Left colon (tissue), 2 donors: ENCODE measurements at regions of chr1 and their contacts with region 1.

Region 1: GRCh38 chr1:160291248-160292220 is 6.6 kb upstream of the PEX19 start:
- DNase-seq: peak; percentile 47 to 59
- ATAC-seq: peak; percentile 92

Region 2: GRCh38 chr1:160058087-160058486 is 233.4 kb before region 1 on chr1:
- intact Hi-C with region 1: no loop called
- DNase-seq: no peak
- ATAC-seq: no peak

Region 3: GRCh38 chr1:160193091-160193819 is 98.3 kb before region 1 on chr1:
- intact Hi-C with region 1: loop called in 1 of 2 experiments (anchors 5 kb)
- DNase-seq: peak; percentile 62 to 85
- ATAC-seq: peak; percentile 92

Region 4: GRCh38 chr1:160244209-160244608 is 47.3 kb before region 1 on chr1:
- intact Hi-C with region 1: loop called in 1 of 2 experiments (anchors 10 kb)
- DNase-seq: no peak
- ATAC-seq: no peak

Region 5: DNA sequence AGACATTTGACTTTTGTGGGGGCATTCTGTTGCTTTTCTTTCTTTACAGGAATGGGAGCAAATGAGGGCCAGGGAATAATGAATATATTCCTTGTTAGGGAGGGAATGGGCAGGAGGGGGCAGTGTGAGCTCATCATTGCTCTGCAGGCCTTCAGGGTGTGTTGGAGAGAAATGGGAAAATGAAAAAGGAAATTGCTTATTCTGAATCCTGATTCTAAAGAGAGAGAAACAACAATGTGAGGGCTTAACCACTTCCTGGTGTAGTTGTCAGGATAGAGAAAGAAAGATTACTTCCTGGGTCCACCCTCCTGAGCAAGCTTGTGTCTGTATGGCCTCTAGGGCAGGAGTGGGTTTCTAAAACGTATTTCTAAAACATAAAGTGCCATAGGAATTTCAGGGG is 137.1 kb after region 1 on chr1:
- intact Hi-C with region 1: no loop called
- DNase-seq: peak; percentile 49 to 79
- ATAC-seq: peak; percentile 89

Region 6: DNA sequence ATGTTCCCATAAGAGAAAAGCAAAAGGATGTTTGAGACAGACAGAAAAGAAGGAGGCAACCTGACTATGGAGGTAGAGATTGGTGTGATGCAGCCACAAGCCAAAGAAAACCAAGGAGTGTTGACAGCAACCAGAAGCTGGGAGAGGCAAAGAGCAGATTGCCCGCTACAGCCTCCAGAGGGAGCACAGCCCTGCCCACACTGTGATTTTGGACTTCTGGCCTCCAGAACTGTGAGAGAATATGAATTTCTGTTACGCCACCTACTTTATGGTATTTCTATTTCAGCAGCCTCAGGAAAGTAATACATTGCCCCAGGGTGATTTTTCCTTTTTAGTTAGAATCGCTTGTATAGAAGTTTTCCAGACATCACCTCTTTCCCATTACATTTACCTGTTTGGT is 203.1 kb after region 1 on chr1:
- intact Hi-C with region 1: no loop called
- DNase-seq: peak in 1 of 2 donors; percentile 25
- ATAC-seq: peak; percentile 72

Region 7: DNA sequence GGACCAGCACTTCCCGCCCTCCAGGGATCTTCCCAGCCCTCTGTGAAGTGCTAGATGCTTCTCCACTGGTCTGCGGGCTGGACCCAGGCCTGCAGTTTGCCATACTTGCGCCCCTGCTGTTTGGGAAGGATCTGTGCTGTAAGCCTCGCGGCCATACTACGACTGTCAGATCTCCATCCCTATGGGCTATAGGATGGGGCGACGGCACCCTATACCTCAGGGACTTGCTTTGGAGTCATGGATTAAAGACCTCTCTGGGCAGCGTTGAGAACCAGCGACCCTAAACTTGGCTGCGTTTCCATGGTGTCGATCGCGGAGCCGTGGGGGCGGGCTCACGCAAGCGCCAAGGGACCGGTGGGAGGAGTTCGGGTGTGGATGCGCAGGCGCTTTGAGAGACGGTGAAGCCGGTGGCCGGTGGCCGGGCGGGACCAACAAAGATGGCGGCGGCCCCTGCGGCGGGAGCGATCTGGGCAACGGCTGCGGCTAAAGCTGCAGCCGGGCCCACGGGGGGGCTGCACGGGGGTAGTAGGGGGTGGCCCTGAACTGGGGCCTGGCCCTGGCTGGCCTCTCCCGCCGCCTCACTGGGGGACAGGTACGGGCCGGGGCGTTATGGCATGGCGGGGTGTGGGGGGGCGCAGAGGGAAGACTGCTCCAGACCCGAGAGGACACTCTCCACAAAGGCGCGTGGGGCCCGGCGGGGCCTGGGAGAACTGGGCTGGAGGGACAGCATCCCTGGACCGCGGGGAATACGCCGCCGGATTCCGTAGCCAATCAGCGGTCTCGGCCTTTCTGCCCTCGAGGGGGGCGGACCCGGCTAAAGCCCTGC is 867.8 kb after region 1 on chr1 and contains the start of gene USP21:
- intact Hi-C with region 1: no loop called
- DNase-seq: peak; percentile 90 to 95
- ATAC-seq: peak; percentile 96
- total RNA-seq, gene USP21: 19.7 to 24.0 TPM